ENCODE measurements at regions of chr20 and their contacts with region 1.

Region 1: DNA sequence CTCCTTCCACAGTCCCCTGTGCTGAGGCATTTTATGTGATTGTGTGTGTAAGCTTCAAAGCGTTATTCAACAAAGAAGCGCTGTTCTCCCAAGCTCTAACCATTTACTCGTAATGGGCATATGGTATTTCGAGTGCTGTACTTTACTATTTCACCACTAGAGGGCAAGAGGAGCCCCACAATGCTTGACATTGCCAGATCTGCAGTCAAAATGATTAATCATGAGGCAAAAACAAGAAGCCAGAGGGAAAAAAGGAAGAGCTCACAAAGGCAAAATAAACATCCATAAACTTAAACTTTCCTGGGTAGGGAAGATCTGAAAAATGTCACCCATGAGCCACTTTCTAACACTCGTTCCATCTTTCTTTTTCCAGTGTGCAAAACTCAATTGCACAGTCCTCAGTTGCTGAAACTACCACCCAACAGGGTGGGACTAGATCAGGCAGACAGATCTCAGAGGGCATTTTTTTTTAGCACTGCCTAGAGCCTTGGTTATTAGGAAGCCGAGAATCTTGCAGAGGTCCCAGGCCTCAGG is 215.0 kb upstream of the PLCB4 start:
- DNase-seq: peak; percentile 70 to 80
- ATAC-seq: peak; percentile 88 to 97
- H3K4me3 ChIP-seq: no peak overlapping the region
- H3K27ac ChIP-seq: peak overlapping the region; percentile 45 to 63; a peak in 4 of 6 replicates
- H3K4me1 ChIP-seq: peaks cover 16% of the 10 kb centered on the region
- CTCF ChIP-seq: peak; percentile 95
- EP300 ChIP-seq: no peak
- POLR2A ChIP-seq: no peak
- RAD21 ChIP-seq: peak; percentile 94 to 97

Region 2: GRCh38 chr20:8399947-8400346 is 453.9 kb before region 1 on chr20:
- CTCF ChIA-PET with region 1: no interaction called
- POLR2A ChIA-PET with region 1: no interaction called
- DNase-seq: no peak
- ATAC-seq: no peak
- H3K4me3 ChIP-seq: no peak overlapping the region
- H3K27ac ChIP-seq: no peak overlapping the region
- H3K4me1 ChIP-seq: no peaks in the 10 kb centered on the region
- CTCF ChIP-seq: no peak
- EP300 ChIP-seq: no peak
- POLR2A ChIP-seq: no peak
- RAD21 ChIP-seq: no peak

Region 3: GRCh38 chr20:8790442-8791074 is 63.3 kb before region 1 on chr20:
- CTCF ChIA-PET with region 1: interaction called, 11 read pairs
- POLR2A ChIA-PET with region 1: no interaction called
- DNase-seq: peak; percentile 15 to 63
- ATAC-seq: peak; percentile 69 to 75; a peak in 5 of 6 replicates
- H3K4me3 ChIP-seq: no peak overlapping the region
- H3K27ac ChIP-seq: peak overlapping the region in 1 of 2 experiments; percentile 44; a peak in 1 of 6 replicates
- H3K4me1 ChIP-seq: no peaks in the 10 kb centered on the region
- CTCF ChIP-seq: peak; percentile 99
- EP300 ChIP-seq: no peak
- POLR2A ChIP-seq: no peak
- RAD21 ChIP-seq: peak; percentile 95 to 98

Region 4: GRCh38 chr20:8837396-8837795 is 16.5 kb before region 1 on chr20:
- CTCF ChIA-PET with region 1: interaction called, 33 read pairs
- POLR2A ChIA-PET with region 1: no interaction called
- DNase-seq: peak in 1 of 2 experiments; percentile 54
- ATAC-seq: peak; percentile 47 to 71; a peak in 4 of 6 replicates
- H3K4me3 ChIP-seq: no peak overlapping the region
- H3K27ac ChIP-seq: no peak overlapping the region
- H3K4me1 ChIP-seq: 0 out of 3 replicates have a peak, but pooled peaks cover 3% of the 10 kb centered on the region
- CTCF ChIP-seq: no peak
- EP300 ChIP-seq: no peak
- POLR2A ChIP-seq: no peak
- RAD21 ChIP-seq: no peak

Region 5: DNA sequence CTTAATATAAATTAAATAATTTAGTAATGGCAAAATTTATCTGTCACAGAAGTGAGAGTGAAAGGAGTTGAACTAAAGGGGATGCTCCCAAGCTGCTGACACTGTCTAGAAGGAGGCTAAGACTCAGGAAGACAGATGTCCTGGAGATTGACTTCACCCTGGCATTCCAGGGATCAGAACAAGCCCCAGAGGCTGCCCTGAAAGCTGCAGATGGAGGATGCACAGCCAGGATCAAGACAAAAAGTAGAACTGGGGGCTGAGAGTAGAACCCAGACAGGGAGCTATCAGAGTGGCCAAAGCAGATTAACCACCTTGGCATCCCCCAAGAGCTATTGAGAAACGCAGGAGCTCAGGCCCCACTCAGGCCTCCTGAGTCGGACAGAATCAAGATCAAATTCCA is 25.8 kb after region 1 on chr20:
- CTCF ChIA-PET with region 1: interaction called, 15 read pairs
- POLR2A ChIA-PET with region 1: no interaction called
- DNase-seq: no peak
- ATAC-seq: peak; percentile 70 to 78
- H3K4me3 ChIP-seq: no peak overlapping the region
- H3K27ac ChIP-seq: peak overlapping the region; percentile 37 to 56; a peak in 5 of 6 replicates
- H3K4me1 ChIP-seq: peaks cover 23% of the 10 kb centered on the region
- CTCF ChIP-seq: no peak
- EP300 ChIP-seq: no peak
- POLR2A ChIP-seq: no peak
- RAD21 ChIP-seq: no peak

Region 6: GRCh38 chr20:9075264-9076095 is 221.6 kb after region 1 on chr20:
- CTCF ChIA-PET with region 1: interaction called, 42 read pairs
- POLR2A ChIA-PET with region 1: no interaction called
- DNase-seq: no peak
- ATAC-seq: no peak
- H3K4me3 ChIP-seq: no peak overlapping the region
- H3K27ac ChIP-seq: peak overlapping the region in 1 of 2 experiments; percentile 24; a peak in 1 of 6 replicates
- H3K4me1 ChIP-seq: peaks cover 51% of the 10 kb centered on the region
- CTCF ChIP-seq: no peak
- EP300 ChIP-seq: no peak
- POLR2A ChIP-seq: no peak
- RAD21 ChIP-seq: no peak

Region 7: DNA sequence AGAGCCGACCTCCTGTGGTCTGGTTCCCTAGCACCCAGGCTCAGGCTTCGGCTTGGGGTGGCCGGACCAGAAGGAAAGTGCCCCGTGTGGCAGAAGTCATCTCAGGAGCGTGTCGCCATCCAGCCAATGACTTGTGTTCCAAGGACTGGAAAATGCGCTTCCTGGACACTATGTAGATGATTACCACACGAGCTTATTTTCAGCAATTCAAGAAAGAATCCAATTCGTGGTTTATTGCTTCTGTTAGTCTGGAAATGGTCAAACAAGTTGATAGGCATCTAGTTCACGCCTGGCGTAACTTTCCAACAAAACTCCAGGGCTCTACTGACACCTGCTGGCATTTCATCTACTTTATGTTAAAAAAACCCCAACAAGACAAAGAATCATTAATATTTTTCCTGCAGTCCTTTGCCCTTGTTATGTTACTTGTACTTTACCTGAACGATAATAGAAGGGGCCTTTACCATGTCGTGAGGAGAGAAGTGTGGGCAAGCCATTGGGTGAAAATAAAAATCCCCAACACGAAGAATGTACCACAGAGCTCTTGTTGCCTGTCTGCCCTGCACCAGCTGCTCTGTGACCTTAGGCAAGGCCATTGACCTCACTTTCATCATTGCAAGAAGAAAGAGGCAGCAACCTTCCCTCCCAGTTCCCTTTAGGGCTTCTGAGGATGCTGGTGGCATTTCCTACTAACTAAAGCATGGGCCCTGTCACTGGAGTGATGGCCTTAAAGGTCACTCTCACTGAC is 505.9 kb after region 1 on chr20:
- CTCF ChIA-PET with region 1: interaction called, 71 read pairs
- POLR2A ChIA-PET with region 1: no interaction called
- DNase-seq: peak; percentile 60 to 77
- ATAC-seq: peak; percentile 87 to 93
- H3K4me3 ChIP-seq: no peak overlapping the region
- H3K27ac ChIP-seq: peak overlapping the region; percentile 31 to 53; a peak in 4 of 6 replicates
- H3K4me1 ChIP-seq: peaks cover 8% of the 10 kb centered on the region; the same call in 2 of the 3 replicates
- CTCF ChIP-seq: peak; percentile 99
- EP300 ChIP-seq: no peak
- POLR2A ChIP-seq: no peak
- RAD21 ChIP-seq: peak; percentile 92 to 98